Posterior cingulate gyrus (tissue), 11 donors: ENCODE measurements at regions of chr7 and their contacts with region 1.

Region 1: DNA sequence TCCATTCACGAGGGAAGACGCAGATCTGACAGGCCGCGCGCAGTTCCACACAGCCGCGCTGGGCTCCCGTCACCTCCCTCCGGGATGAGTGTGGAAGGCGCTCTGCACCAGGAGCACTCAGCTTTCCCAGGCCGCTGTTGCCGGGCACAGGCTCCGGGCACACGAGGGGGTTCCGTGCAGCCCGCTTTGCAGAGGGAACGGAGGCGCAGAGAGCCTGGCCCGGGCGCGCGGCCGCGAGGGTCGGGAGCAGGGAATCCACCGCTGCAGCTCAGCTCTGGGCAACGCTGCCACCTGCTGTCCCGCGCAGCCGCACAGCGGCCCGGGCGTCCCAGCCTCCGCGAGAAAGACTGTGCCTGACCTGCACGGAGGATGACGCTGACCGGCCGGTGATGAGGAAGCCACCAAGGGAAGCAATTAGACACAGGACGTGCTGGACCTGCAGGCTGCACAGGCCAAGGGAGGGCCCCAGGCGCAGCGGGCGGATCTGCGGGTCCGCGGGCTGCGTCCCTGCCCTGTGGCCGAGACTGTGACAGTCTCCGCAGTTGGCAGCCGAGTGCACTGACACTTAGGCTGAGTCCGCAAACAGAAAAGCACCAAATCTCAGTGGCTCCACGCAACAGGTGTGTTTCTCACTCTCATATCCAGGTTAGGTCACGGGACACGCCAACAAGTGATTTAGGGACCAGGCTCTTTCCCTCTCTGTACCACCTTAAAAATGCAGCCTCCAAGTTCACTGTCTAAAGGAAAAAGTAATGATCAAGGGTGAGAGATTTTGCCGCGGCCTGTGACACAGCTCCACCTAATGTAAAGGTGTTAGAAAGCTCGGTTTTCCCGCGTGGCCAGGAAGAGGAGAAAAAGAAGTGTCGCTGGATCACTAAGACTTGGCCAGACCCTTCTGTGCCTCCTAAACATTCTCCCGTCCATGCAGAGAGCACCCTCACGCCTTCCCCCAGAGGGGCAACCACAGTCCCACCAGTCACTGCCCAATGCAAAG is 94.5 kb downstream of the SEC61G start:
- DNase-seq: peak; percentile 64 to 96 (median 76)

Region 2: DNA sequence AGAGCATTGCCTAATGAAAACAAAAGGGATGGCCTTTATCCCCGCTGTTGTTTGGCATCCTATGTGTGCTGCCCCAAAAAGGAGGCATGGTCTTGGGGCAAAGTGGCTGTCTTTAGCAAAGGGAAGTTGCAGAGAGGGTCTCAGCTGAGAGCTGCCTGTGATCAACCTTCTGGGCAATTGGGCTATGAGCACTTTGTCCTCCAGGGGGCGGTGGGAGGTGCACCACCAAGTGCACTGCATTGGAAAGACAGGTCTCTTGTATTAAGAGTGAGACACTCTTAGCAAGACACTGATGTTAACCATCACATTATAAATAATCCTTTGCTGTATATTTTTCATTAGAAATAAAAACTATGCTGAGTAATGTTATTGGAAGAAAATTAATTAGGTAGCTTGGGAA is 1314.3 kb before region 1 on chr7:
- intact Hi-C with region 1: loop called (anchors 10 kb)
- DNase-seq: peak in 5 of 10 donors; percentile 23 to 67 (median 32)

Region 3: DNA sequence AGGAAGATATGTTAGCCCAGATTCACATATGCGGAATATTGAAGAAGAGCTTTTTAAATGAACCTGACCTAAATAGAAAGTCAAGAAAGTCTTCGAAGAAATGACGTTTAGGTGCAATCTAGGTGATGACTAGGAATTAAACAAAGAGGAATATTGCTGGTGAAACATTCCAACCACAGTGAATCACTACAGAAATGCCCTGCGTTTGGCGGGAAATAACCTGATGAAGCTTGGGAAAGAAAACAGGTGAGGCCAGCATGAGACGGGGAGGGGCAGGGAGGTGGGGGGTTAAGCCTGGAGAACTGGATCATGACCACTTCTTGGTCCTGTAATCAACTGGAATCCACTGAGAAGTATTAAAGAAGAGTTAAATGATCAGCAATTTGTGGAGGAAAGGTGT is 421.8 kb before region 1 on chr7:
- intact Hi-C with region 1: loop called (anchors 10 kb)
- DNase-seq: no peak

Region 4: GRCh38 chr7:54546081-54546985 is 118.2 kb before region 1 on chr7:
- intact Hi-C with region 1: loop called (anchors 10 kb)
- DNase-seq: peak in 8 of 10 donors; percentile 18 to 89 (median 45)

Region 5: GRCh38 chr7:54773472-54774399 is 109.2 kb after region 1 on chr7:
- intact Hi-C with region 1: no loop called
- DNase-seq: peak; percentile 68 to 97 (median 86)